Right cardiac atrium (tissue), 5 donors: ENCODE measurements at regions of chr6 and their contacts with region 1.

Region 1: DNA sequence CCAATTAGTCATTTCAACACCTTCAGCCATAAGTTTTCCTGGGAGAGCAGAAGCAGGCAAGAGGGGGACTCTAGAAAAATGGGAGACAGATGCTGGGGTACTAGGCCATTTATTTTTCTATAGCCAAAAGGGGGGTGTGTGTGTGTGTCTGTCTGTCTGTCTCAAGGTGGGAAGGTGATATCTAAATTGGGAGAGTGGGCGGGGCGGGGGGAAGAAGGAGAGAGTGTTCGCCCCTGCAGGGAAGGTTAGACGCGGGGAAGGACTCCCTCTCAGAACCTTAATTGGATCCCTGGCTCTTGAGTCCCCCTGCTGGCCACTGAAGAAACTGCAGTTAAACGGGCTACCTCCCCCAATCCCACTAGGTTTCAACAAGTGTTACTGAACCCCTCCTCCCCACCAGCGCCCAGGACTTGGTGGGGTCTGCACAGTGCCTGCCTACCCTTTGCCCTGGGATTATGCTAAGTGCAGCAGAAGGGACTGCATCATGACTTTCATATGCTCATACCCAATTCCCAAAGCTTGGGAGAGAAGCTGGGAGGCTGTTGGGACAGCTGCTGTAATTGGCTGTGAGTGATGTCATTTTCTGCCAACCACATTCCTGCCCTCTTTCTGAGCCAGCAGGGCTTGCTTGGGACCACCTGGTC is 45.8 kb downstream of the FOXP4 start:
- DNase-seq: peak; percentile 56 to 87 (median 82)
- ATAC-seq: peak; percentile 61 to 73
- H3K4me3 ChIP-seq: no peak overlapping the region
- H3K27ac ChIP-seq: no peak overlapping the region
- H3K4me1 ChIP-seq: no peaks in the 10 kb centered on the region
- H3K27me3 ChIP-seq: no peaks in the 10 kb centered on the region

Region 2: DNA sequence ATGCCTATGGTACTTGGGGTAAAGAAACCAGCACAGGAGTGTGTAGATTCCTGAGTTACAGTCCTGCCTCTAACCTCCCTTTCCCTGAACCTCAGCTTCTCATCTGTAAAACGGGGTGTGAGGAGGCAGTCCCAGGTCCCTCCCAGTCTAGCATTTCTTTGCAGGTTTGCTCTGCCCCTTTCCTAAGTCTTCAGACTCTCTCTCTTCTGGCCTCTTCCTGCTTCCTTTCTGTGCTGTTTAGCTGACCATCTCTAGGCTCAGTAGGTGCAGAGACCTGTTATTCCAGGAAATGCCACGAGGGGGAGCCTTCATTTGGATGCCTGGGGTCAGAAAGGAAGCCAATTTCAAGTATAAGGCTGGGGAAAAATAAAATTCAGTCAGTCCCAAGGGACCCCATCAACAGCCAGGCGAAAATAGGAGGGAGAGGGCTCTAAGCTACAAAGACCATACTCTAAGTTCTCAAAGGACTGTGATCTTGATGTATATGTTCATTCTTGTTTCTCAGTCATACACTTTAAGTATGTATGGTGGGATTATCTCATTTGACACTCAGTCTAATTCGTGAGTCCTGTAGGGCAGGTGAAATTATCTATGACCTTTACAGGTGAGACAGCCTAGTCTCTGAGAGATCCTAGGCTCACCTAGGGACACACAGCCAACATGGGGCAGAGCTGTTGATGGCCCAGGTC is 167.5 kb before region 1 on chr6:
- intact Hi-C with region 1: loop called in 3 of 4 experiments (anchors 5 to 10 kb)
- DNase-seq: peak; percentile 79 to 93 (median 87)
- ATAC-seq: peak; percentile 7 to 40
- H3K4me3 ChIP-seq: no peak overlapping the region
- H3K27ac ChIP-seq: no peak overlapping the region
- H3K4me1 ChIP-seq: peaks cover 1% of the 10 kb centered on the region
- H3K27me3 ChIP-seq: no peaks in the 10 kb centered on the region

Region 3: GRCh38 chr6:41723530-41724227 is 131.7 kb after region 1 on chr6:
- intact Hi-C with region 1: no loop called
- DNase-seq: peak; percentile 83 to 90 (median 89)
- ATAC-seq: peak; percentile 80 to 89
- H3K4me3 ChIP-seq: no peak overlapping the region
- H3K27ac ChIP-seq: peak overlapping the region; percentile 49
- H3K4me1 ChIP-seq: peaks cover 30% of the 10 kb centered on the region
- H3K27me3 ChIP-seq: no peaks in the 10 kb centered on the region